ENCODE measurements at regions of chr16 and their contacts with region 1.

Region 1: GRCh38 chr16:83898463-83899271 is at the start of gene MLYCD:
- DNase-seq: peak; percentile 88 to 93
- ATAC-seq: peak; percentile 70 to 72
- H3K4me3 ChIP-seq: peak within 1 kb of the TSS; percentile 63 to 88 (median 68)
- H3K27ac ChIP-seq: peak within 1 kb of the TSS; percentile 91 to 97 (median 94)
- H3K4me1 ChIP-seq: peaks cover 39 to 47% of the 10 kb centered on the region in 2 donors
- H3K27me3 ChIP-seq: no peaks in the 10 kb centered on the region
- CTCF ChIP-seq: peak in 1 of 5 experiments; percentile 27
- POLR2A ChIP-seq: peak; percentile 94 to 97
- total RNA-seq, gene MLYCD: 10.3 to 20.8 (median 18.4) TPM

Region 2: DNA sequence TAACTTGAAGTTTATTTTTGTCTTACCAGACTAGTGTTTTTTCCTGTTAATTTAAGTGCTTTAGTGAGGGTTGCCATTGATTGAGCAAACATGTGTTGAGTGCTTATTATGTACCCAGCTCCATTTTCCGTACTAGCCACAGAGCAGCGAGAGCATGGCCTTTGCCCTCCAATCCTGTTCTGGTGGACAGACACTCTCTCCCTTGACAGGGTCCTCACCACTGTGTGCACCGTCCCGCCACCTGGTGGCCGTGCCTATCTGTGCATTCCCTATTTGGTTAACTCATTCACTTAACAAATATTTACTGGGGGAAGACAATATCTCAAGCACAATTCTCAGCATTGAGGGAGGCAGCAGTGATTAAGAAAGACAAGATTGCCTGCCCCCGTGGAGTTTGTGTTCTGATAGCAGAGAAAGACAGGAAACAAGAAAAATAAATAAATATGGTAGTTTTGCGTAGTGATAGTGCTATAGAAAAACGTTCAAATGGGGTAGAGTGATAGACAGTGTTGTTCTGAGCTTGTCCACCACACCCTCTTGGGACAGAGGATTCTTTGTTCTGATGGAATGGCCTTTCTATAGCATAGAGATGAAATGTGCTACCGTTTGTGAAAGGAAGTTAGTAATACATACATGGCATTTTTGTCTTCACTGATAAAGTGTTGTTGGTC is 1258.9 kb before region 1 on chr16:
- in situ Hi-C with region 1: no loop called
- intact Hi-C with region 1: loop called (anchors 10 kb)
- DNase-seq: peak; percentile 16 to 50
- ATAC-seq: peak; percentile 31 to 61
- H3K4me3 ChIP-seq: no peak overlapping the region
- H3K27ac ChIP-seq: peak overlapping the region; percentile 10 to 63 (median 42)
- H3K4me1 ChIP-seq: peaks cover 42 to 45% of the 10 kb centered on the region in 2 donors
- H3K27me3 ChIP-seq: no peaks in the 10 kb centered on the region
- CTCF ChIP-seq: peak; percentile 47 to 75 (median 66)
- POLR2A ChIP-seq: no peak

Region 3: GRCh38 chr16:83653785-83654184 is 244.9 kb before region 1 on chr16:
- in situ Hi-C with region 1: no loop called
- intact Hi-C with region 1: no loop called
- DNase-seq: no peak
- ATAC-seq: no peak
- H3K4me3 ChIP-seq: no peak overlapping the region
- H3K27ac ChIP-seq: no peak overlapping the region
- H3K4me1 ChIP-seq: no peaks in the 10 kb centered on the region
- H3K27me3 ChIP-seq: no peaks in the 10 kb centered on the region
- CTCF ChIP-seq: no peak
- POLR2A ChIP-seq: no peak

Region 4: GRCh38 chr16:83913245-83913633 is 14.6 kb after region 1 on chr16:
- in situ Hi-C with region 1: no loop called
- intact Hi-C with region 1: loop called (anchors 1 kb)
- DNase-seq: peak; percentile 30 to 94
- ATAC-seq: peak; percentile 50 to 79
- H3K4me3 ChIP-seq: no peak overlapping the region
- H3K27ac ChIP-seq: peak overlapping the region; percentile 85 to 96 (median 92)
- H3K4me1 ChIP-seq: peaks cover 22 to 33% of the 10 kb centered on the region in 2 donors
- H3K27me3 ChIP-seq: no peaks in the 10 kb centered on the region
- CTCF ChIP-seq: no peak
- POLR2A ChIP-seq: no peak

Region 5: DNA sequence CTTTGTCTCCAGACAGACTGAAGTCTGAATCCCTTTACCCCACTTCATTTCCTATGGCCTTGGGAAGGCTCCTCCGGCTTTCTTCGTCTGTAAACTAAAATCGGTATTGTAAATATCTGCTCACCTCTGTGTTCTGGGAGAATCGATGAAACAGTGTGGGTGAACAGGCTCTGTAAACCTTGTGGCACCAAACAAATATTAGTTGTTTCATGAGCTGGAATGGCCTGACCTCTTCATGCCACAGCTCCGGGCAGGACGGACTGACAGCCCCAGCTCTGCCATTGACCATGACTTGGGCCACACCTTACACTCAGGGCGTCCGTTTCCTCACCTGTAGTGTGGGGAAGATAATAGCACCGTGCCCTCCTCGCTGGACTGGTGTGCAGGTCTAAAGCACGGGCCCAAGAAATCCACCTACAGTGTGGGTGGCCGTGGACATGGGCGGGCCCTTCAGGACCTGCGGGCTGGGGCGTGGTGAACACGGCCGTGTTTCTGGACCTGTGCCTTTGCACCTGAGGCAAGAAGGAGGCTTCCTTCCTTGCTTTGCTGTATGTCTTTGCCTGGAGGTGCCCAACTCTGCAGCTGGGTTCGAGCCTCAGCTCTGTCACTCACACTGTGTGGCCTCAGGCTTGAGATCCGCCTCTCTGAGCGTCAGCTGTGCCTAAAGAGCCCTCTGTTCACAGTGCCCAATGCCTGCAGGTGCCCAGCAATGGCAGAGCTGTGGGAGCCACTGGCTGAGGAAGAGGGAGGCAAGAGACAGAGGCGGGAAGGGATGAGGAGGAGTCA is 48.3 kb after region 1 on chr16:
- in situ Hi-C with region 1: no loop called
- intact Hi-C with region 1: no loop called
- DNase-seq: no peak
- ATAC-seq: no peak
- H3K4me3 ChIP-seq: no peak overlapping the region
- H3K27ac ChIP-seq: no peak overlapping the region
- H3K4me1 ChIP-seq: peaks cover 0 to under 1% of the 10 kb centered on the region in 2 donors
- H3K27me3 ChIP-seq: no peaks in the 10 kb centered on the region
- CTCF ChIP-seq: no peak
- POLR2A ChIP-seq: no peak

Region 6: DNA sequence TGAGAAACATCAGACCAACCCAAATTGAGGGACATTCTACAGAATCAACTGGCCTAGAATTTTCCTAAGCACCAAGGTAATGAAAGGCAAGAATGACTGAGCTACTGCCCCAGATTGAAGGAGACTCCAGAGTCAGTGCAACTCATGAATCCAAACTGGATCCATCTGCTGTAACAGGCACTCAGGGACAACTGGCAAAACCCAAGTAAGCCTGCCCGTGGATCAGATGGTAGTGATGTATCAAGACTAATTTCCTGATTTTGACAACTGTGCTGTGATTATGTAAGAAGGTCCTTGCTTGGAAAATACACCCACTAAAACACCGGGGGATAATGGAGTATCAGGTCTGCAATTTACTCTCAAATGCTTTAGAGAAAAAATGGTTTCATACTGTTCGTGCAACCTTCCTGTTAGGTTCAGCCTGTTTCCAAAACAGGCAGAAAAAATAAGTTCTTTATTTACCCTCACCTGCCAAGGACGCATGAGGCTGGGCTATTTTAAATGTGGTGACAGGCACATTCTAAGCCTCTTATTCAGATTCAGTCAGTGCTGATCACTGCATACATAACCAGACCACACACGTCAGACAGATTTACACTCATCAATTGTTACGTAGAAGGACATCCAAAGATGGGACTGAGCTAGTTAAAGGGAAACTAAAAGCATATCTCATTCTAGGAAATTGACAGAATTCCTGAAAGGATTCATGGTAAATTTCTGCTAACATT is 211.1 kb after region 1 on chr16:
- in situ Hi-C with region 1: no loop called
- intact Hi-C with region 1: loop called (anchors 5 kb)
- DNase-seq: peak; percentile 32 to 35
- ATAC-seq: peak; percentile 89 to 95
- H3K4me3 ChIP-seq: no peak overlapping the region
- H3K27ac ChIP-seq: peak overlapping the region; percentile 72 to 86 (median 79)
- H3K4me1 ChIP-seq: peaks cover 56 to 61% of the 10 kb centered on the region in 2 donors
- H3K27me3 ChIP-seq: no peaks in the 10 kb centered on the region
- CTCF ChIP-seq: no peak
- POLR2A ChIP-seq: peak in 1 of 2 donors; percentile 22

Region 7: DNA sequence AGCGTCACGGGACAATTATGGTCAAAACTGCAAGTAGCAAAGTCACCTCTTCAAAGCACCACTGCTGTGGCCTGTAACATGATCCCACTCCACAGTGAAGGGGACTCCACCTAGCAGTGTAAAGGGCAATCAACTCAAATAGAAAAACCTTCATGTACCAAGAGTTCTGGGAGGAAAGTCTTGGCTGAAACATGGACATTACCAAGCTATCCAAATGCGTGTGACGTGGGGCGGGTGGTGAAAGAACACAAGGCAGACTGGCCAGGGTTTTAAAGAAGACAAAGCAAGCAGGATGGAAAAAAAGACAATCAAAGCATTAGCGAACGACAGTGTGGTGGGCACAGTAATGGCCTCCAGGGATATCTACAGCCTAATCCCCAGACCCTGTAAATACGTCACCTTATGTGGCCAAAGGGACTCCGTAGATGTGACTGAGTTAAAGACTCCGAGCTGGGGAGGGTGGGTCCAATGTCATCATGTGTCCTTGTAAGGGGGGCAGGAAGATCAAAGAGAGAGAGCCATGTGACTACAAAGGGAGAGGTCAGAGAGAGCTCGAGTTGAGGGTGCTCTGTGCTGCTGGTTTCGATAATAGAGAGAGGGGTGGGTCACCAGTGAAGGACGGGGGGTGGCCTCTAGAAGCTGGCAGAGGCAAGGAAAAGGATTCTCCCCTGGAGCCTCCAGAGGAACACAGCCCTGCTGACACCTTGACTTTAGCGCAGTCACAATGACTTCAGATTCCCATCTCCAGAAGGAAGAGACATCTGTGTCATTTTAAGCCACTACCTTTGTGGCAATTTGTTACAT is 240.4 kb after region 1 on chr16:
- in situ Hi-C with region 1: no loop called
- intact Hi-C with region 1: loop called (anchors 5 kb)
- DNase-seq: peak; percentile 32 to 77
- ATAC-seq: peak; percentile 91 to 93
- H3K4me3 ChIP-seq: peak overlapping the region; percentile 23 to 45 (median 42)
- H3K27ac ChIP-seq: peak overlapping the region; percentile 86 to 92 (median 87)
- H3K4me1 ChIP-seq: peaks cover 12 to 30% of the 10 kb centered on the region in 2 donors
- H3K27me3 ChIP-seq: no peaks in the 10 kb centered on the region
- CTCF ChIP-seq: no peak
- POLR2A ChIP-seq: peak in 1 of 2 donors; percentile 28